ENCODE measurements at regions of chr1 and their contacts with region 1.

Region 1: GRCh38 chr1:20194757-20195461 is 8.6 kb upstream of the PLA2G2C start:
- DNase-seq: peak; percentile 76
- CTCF ChIP-seq: peak; percentile 91

Region 2: DNA sequence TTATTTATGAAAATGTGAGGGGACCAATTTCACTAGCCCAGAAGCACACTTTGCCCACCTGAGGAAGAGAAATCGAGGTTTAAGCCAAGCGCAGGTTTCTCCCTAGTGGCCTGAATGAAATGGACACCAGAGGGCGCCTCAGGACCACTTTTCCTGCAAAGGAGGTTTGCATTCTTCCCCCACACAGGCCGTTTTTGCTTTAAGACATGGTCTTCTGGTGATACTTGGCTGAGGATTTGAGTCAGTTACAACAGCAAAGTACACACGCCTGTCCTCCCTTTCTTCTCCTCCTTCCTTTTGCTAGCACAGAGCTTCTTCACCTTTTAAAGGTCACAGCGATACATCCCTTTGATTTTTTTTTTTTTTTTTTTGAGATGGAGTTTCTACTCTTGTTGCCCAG is 276.9 kb before region 1 on chr1:
- CTCF ChIA-PET with region 1: interaction called, 72 read pairs
- POLR2A ChIA-PET with region 1: no interaction called
- DNase-seq: peak; percentile 89
- CTCF ChIP-seq: peak; percentile 85

Region 3: DNA sequence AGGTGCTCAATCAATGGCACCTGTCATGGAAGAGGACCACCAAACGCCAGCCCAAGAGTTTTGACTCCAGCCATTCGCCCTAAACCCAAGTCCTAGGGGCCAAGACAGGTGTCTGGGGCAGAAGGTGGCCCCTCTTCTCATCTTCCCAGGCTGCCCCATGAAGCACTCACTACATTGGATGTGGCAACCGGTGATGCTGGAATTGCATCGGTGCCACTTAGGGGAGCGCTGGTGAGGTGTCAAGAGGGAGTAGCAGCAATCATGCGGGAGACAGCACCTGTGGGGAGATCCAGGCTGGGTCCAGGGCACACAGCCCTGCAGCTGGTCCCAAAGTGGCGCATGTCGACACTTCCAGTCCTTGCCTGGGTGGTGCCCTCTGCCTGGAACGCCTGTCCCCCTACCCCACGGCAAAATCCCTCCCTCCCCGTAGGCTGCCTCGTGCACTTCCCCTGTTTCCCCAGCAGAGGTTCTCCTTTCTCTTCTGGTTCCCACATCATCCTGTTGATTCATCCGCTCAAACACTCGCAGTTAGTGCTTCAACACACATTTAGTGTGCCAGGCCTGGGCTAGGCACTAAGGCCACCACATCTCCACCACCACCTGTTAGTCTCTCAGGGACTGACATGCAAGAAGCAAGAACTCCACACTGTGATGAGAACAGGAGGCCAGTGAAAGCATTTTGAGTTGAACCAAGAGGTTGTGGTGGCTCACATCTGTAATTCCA is 94.1 kb before region 1 on chr1:
- CTCF ChIA-PET with region 1: interaction called, 18 read pairs
- POLR2A ChIA-PET with region 1: no interaction called
- DNase-seq: peak; percentile 77
- CTCF ChIP-seq: peak; percentile 79

Region 4: DNA sequence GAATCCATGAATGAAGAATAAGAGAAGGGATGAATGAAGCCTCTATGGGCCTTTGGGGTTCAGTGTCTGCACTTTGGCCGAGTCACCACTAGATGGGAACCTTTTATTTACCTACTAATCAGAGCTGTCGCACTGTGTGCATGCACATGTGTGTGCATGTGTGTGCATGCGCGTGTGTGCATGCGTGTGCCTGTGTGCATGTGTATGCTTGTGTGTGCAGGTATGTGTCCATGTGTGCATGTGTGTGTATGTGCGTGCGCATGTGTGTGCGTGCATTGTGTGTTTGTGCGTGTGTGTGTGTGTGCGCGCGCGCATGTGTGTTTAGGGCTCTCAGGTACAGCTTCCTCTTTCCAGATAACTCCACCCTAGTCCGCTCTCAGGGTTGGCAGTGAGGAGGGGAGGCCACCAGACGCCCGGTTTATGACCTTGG is 29.4 kb before region 1 on chr1:
- CTCF ChIA-PET with region 1: interaction called, 10 read pairs
- POLR2A ChIA-PET with region 1: no interaction called
- DNase-seq: peak; percentile 61
- CTCF ChIP-seq: peak; percentile 30

Region 5: GRCh38 chr1:20250341-20250989 is 55.6 kb after region 1 on chr1:
- CTCF ChIA-PET with region 1: no interaction called
- POLR2A ChIA-PET with region 1: no interaction called
- DNase-seq: no peak
- CTCF ChIP-seq: no peak

Region 6: GRCh38 chr1:20343149-20343937 is 148.4 kb after region 1 on chr1:
- CTCF ChIA-PET with region 1: no interaction called
- POLR2A ChIA-PET with region 1: no interaction called
- DNase-seq: peak; percentile 73
- CTCF ChIP-seq: no peak